ENCODE measurements at regions of chr7 and their contacts with region 1.

Region 1: DNA sequence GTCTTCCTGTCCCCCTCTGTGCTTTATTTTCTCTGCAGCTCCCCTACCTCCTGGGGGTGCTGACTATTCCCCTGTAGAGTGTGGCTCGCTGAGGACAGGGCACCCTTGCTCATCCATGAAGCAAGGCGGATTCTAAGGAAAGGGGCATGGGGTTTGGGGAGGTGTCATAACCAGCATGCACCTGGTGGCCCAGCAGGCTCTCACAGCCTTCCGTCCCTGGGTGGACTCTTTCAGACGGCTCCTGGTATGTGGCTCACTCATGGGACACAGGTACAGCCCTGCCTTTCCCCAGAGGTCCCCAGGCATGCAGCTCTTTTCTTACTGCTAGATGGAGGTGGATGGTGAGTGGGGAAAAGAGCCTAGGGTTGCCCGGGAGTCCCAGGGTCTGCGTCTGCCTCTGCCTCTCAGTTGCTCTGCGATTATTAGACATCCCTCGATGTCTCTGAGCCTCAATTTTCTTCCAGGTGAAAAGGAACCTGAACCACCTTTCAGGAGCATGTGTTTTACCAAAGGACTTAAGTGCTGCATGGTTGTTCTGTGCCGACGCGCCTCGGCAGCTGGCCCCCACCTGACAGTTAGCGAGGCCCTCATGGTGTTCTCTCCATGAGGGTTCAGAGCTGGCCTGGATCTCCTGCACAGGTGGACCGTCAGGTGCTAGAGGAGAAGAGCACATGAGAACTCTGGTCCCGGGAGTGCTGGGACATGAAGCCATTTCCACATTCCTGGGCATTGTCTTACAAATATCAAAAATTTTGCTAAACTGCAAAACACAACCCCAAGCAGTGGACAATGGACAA is 172.5 kb upstream of the SHH start:
- DNase-seq: peak in 1 of 14 experiments; percentile 4
- ATAC-seq: no peak
- H3K4me3 ChIP-seq: no peak overlapping the region
- H3K4me3 Mint-ChIP-seq: no peak overlapping the region
- H3K27ac ChIP-seq: no peak overlapping the region
- H3K27ac Mint-ChIP-seq: no peak overlapping the region
- H3K4me1 ChIP-seq: no peaks in the 10 kb centered on the region
- H3K4me1 Mint-ChIP-seq: peaks cover 28% of the 10 kb centered on the region
- H3K27me3 ChIP-seq: no peaks in the 10 kb centered on the region
- H3K27me3 Mint-ChIP-seq: no peaks in the 10 kb centered on the region
- CTCF ChIP-seq: no peak

Region 2: DNA sequence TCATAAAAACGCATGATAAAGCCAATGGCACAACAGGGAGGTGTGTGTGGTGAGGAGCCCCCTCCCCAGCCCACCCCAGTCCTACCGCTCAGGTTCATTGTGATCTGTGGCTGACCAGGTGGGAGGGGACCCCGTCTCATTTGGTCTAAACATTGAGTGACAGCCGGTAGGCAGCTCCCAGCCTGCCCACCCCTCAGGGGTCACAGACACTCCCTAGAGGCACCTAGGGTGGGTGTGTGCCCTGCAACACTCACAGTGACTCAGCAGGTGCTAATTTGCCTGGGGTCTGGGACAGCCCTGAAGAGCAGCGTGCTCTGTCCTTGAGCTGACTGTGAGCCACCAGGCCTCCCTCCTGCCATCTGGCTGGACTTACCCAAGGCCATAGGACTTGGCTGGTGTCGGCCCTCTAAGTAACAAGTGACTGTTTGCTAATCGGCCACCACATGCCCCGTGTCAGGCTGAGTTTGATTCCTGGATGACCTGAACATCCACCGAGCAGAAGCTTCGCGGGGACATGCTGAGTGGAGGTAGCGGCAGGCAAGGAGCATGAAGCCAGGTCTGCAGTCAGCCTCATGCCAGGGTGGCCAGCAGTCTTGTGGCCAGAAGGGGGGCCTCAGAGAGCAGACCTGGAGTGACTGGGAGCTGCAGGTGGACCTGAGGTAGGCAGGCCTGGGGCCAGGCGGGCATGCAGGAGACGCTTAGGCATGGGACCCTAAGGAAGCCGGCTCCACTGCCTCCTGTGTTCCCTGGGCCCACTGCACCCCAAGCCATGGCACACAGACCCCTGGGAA is 109.7 kb after region 1 on chr7:
- CTCF ChIA-PET with region 1: no interaction called
- POLR2A ChIA-PET with region 1: no interaction called
- intact Hi-C with region 1: loop called in 1 of 2 experiments (anchors 5 kb)
- DNase-seq: no peak
- ATAC-seq: no peak
- H3K4me3 ChIP-seq: no peak overlapping the region
- H3K4me3 Mint-ChIP-seq: no peak overlapping the region
- H3K27ac ChIP-seq: no peak overlapping the region
- H3K27ac Mint-ChIP-seq: no peak overlapping the region
- H3K4me1 ChIP-seq: peaks cover 25% of the 10 kb centered on the region
- H3K4me1 Mint-ChIP-seq: peaks cover 41% of the 10 kb centered on the region
- H3K27me3 ChIP-seq: no peaks in the 10 kb centered on the region
- H3K27me3 Mint-ChIP-seq: no peaks in the 10 kb centered on the region
- CTCF ChIP-seq: no peak

Measured in CD4-positive, alpha-beta T cell (primary cell).